ENCODE measurements at regions of chr6 and their contacts with region 1.

Region 1: GRCh38 chr6:29792123-29793035 is 35.2 kb upstream of the HLA-G start:
- DNase-seq: peak; percentile 66 to 87 (median 69)
- H3K4me3 ChIP-seq: peak overlapping the region; percentile 45 to 79
- H3K4me3 Mint-ChIP-seq: peak overlapping the region; percentile 88 to 94 (median 91)
- H3K27ac ChIP-seq: peak overlapping the region; percentile 74
- H3K27ac Mint-ChIP-seq: peak overlapping the region; percentile 68 to 92 (median 86)
- H3K4me1 ChIP-seq: peaks cover 15% of the 10 kb centered on the region
- H3K4me1 Mint-ChIP-seq: peaks cover 8 to 36% (median 18%) of the 10 kb centered on the region in 4 donors
- H3K27me3 ChIP-seq: no peaks in the 10 kb centered on the region
- H3K27me3 Mint-ChIP-seq: peaks cover 14 to 17% of the 10 kb centered on the region in 2 donors

Region 2: DNA sequence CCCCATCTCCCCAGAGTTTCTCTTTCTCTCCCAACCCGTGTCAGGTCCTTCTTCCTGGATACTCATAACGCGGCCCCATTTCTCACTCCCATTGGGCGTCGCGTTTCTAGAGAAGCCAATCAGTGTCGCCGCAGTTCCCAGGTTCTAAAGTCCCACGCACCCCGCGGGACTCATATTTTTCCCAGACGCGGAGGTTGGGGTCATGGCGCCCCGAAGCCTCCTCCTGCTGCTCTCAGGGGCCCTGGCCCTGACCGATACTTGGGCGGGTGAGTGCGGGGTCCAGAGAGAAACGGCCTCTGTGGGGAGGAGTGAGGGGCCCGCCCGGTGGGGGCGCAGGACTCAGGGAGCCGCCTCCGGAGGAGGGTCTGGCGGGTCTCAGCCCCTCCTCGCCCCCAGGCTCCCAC is 69.1 kb before region 1 on chr6 and contains the start of gene HLA-F:
- CTCF ChIA-PET with region 1: no interaction called
- POLR2A ChIA-PET with region 1: interaction called, 5 read pairs
- intact Hi-C with region 1: loop called (anchors 5 kb)
- DNase-seq: peak; percentile 88 to 91 (median 90)
- H3K4me3 ChIP-seq: peak within 1 kb of the TSS; percentile 95
- H3K4me3 Mint-ChIP-seq: peak within 1 kb of the TSS; percentile 94 to 98 (median 96)
- H3K27ac ChIP-seq: peak within 1 kb of the TSS; percentile 100
- H3K27ac Mint-ChIP-seq: peak within 1 kb of the TSS; percentile 96 to 99 (median 98)
- H3K4me1 ChIP-seq: peaks cover 59% of the 10 kb centered on the region
- H3K4me1 Mint-ChIP-seq: peaks cover 33 to 76% (median 43%) of the 10 kb centered on the region in 4 donors
- H3K27me3 ChIP-seq: no peaks in the 10 kb centered on the region
- H3K27me3 Mint-ChIP-seq: no peaks in the 10 kb centered on the region
- total RNA-seq, gene HLA-F: 573 to 585 TPM

Region 3: DNA sequence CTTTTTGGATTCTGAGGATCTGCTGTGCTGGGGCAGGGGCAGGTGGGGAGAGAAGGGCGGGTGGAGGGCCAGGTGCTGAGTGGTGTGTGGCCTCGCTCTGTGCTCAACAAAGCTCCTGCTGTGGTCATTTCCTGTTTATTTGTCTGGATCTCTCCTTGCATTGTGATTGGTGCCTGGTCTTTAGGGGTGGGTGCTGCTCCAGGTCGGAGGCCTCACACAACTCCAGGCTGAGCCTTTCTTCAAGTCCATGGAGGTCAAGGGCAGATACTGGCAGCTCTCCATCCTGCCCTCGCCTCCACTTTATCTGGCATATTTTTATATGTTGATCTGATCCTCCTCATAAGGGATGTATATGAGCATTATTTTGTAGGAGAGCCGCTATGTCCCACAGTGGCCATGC is 32.9 kb before region 1 on chr6:
- CTCF ChIA-PET with region 1: no interaction called
- POLR2A ChIA-PET with region 1: no interaction called
- intact Hi-C with region 1: no loop called
- DNase-seq: no peak
- H3K4me3 ChIP-seq: no peak overlapping the region
- H3K4me3 Mint-ChIP-seq: no peak overlapping the region
- H3K27ac ChIP-seq: no peak overlapping the region
- H3K27ac Mint-ChIP-seq: no peak overlapping the region
- H3K4me1 ChIP-seq: no peaks in the 10 kb centered on the region
- H3K4me1 Mint-ChIP-seq: peaks cover 0 to 10% (median 6%) of the 10 kb centered on the region in 4 donors
- H3K27me3 ChIP-seq: no peaks in the 10 kb centered on the region
- H3K27me3 Mint-ChIP-seq: peaks cover 0 to 5% of the 10 kb centered on the region in 2 donors

Region 4: GRCh38 chr6:29813809-29814208 is 21.4 kb after region 1 on chr6:
- CTCF ChIA-PET with region 1: no interaction called
- POLR2A ChIA-PET with region 1: no interaction called
- intact Hi-C with region 1: no loop called
- DNase-seq: no peak
- H3K4me3 ChIP-seq: no peak overlapping the region
- H3K4me3 Mint-ChIP-seq: no peak overlapping the region
- H3K27ac ChIP-seq: no peak overlapping the region
- H3K27ac Mint-ChIP-seq: no peak overlapping the region
- H3K4me1 ChIP-seq: no peaks in the 10 kb centered on the region
- H3K4me1 Mint-ChIP-seq: peaks cover 0 to 6% (median 4%) of the 10 kb centered on the region in 4 donors
- H3K27me3 ChIP-seq: no peaks in the 10 kb centered on the region
- H3K27me3 Mint-ChIP-seq: peaks cover 2 to 22% of the 10 kb centered on the region in 2 donors

Region 5: DNA sequence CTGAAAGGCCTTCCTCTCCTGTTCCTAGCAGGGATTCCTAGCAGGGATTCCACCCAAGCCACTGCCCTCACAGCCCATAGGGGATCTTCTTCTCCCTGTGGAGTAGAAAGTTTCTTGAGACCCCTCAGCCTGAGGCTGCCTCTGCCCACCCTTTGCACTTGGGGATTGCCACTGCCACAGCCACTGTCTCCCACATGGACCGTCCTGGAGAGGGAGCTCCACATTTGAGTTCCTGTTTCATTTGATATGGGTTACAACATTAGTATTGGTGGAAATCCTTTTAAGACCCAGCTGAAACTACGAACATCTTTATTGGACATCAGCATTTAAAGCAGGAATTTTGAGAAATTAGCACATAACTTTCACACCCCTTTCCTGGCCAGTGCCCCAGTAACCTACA is 60.9 kb after region 1 on chr6:
- CTCF ChIA-PET with region 1: no interaction called
- POLR2A ChIA-PET with region 1: no interaction called
- intact Hi-C with region 1: no loop called
- DNase-seq: no peak
- H3K4me3 ChIP-seq: no peak overlapping the region
- H3K4me3 Mint-ChIP-seq: no peak overlapping the region
- H3K27ac ChIP-seq: no peak overlapping the region
- H3K27ac Mint-ChIP-seq: no peak overlapping the region
- H3K4me1 ChIP-seq: no peaks in the 10 kb centered on the region
- H3K4me1 Mint-ChIP-seq: peaks cover 5 to 16% (median 9%) of the 10 kb centered on the region in 4 donors
- H3K27me3 ChIP-seq: peaks cover 15% of the 10 kb centered on the region
- H3K27me3 Mint-ChIP-seq: peaks cover 21 to 47% of the 10 kb centered on the region in 2 donors

Region 6: DNA sequence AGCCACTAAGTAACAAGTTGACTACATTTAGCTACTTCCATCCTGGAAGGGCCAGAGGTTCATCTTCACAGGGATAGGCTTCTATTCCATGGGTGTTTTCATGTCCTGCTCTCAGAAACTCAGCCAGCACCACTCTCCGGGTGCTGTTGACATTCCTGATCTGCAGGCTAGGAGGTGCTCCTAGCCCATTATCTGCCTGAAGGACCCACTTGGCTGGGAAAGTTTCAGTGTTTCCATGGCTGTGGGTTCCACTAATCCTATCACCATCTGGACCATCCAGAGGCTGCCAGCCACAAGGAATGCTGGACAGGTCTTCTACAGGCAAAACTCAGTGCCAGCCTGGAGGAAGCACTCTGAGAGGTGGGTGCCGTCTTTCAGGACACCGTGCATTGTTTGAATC is 80.4 kb after region 1 on chr6:
- CTCF ChIA-PET with region 1: no interaction called
- POLR2A ChIA-PET with region 1: no interaction called
- intact Hi-C with region 1: no loop called
- DNase-seq: no peak
- H3K4me3 ChIP-seq: no peak overlapping the region
- H3K4me3 Mint-ChIP-seq: no peak overlapping the region
- H3K27ac ChIP-seq: no peak overlapping the region
- H3K27ac Mint-ChIP-seq: no peak overlapping the region
- H3K4me1 ChIP-seq: no peaks in the 10 kb centered on the region
- H3K4me1 Mint-ChIP-seq: no peaks in the 10 kb centered on the region
- H3K27me3 ChIP-seq: no peaks in the 10 kb centered on the region
- H3K27me3 Mint-ChIP-seq: peaks cover 6 to 7% of the 10 kb centered on the region in 2 donors

Region 7: GRCh38 chr6:29953001-29953441 is 160.6 kb after region 1 on chr6:
- CTCF ChIA-PET with region 1: no interaction called
- POLR2A ChIA-PET with region 1: interaction called, 15 read pairs
- intact Hi-C with region 1: no loop called
- DNase-seq: no peak
- H3K4me3 ChIP-seq: no peak overlapping the region
- H3K4me3 Mint-ChIP-seq: no peak overlapping the region
- H3K27ac ChIP-seq: no peak overlapping the region
- H3K27ac Mint-ChIP-seq: peak overlapping the region in 1 of 7 donors; percentile 23
- H3K4me1 ChIP-seq: peaks cover 12% of the 10 kb centered on the region
- H3K4me1 Mint-ChIP-seq: peaks cover 19 to 37% (median 31%) of the 10 kb centered on the region in 4 donors
- H3K27me3 ChIP-seq: no peaks in the 10 kb centered on the region
- H3K27me3 Mint-ChIP-seq: no peaks in the 10 kb centered on the region